ENCODE measurements at regions of chr3 and their contacts with region 1.

Region 1: GRCh38 chr3:191051037-191051436 is 148.0 kb upstream of the OSTN start:
- DNase-seq: no peak
- H3K4me3 ChIP-seq: no peak overlapping the region
- H3K27ac ChIP-seq: no peak overlapping the region
- H3K4me1 ChIP-seq: no peaks in the 10 kb centered on the region
- H3K27me3 ChIP-seq: no peaks in the 10 kb centered on the region
- CTCF ChIP-seq: peak in 2 of 3 experiments; percentile 19 to 40; a peak in 2 of 4 replicates
- EP300 ChIP-seq: no peak
- POLR2A ChIP-seq: no peak
- RAD21 ChIP-seq: peak; percentile 69 to 77

Region 2: GRCh38 chr3:190701096-190701532 is 349.9 kb before region 1 on chr3:
- CTCF ChIA-PET with region 1: interaction called, 23 read pairs
- POLR2A ChIA-PET with region 1: no interaction called
- DNase-seq: peak in 1 of 2 experiments; percentile 21
- H3K4me3 ChIP-seq: no peak overlapping the region
- H3K27ac ChIP-seq: no peak overlapping the region
- H3K4me1 ChIP-seq: no peaks in the 10 kb centered on the region
- H3K27me3 ChIP-seq: no peaks in the 10 kb centered on the region
- CTCF ChIP-seq: peak in 2 of 3 experiments; percentile 61 to 74; a peak in 3 of 4 replicates
- EP300 ChIP-seq: no peak
- POLR2A ChIP-seq: no peak
- RAD21 ChIP-seq: peak; percentile 81 to 85

Region 3: GRCh38 chr3:190811775-190812480 is 239.1 kb before region 1 on chr3:
- CTCF ChIA-PET with region 1: interaction called, 20 read pairs
- POLR2A ChIA-PET with region 1: no interaction called
- DNase-seq: peak; percentile 10 to 57
- H3K4me3 ChIP-seq: no peak overlapping the region
- H3K27ac ChIP-seq: no peak overlapping the region
- H3K4me1 ChIP-seq: no peaks in the 10 kb centered on the region
- H3K27me3 ChIP-seq: no peaks in the 10 kb centered on the region
- CTCF ChIP-seq: peak in 2 of 3 experiments; percentile 65 to 75; a peak in 3 of 4 replicates
- EP300 ChIP-seq: no peak
- POLR2A ChIP-seq: no peak
- RAD21 ChIP-seq: peak; percentile 80 to 87

Region 4: GRCh38 chr3:190883973-190884832 is 166.8 kb before region 1 on chr3:
- CTCF ChIA-PET with region 1: interaction called, 70 read pairs
- POLR2A ChIA-PET with region 1: no interaction called
- DNase-seq: peak; percentile 27 to 51
- H3K4me3 ChIP-seq: no peak overlapping the region
- H3K27ac ChIP-seq: no peak overlapping the region
- H3K4me1 ChIP-seq: no peaks in the 10 kb centered on the region
- H3K27me3 ChIP-seq: no peaks in the 10 kb centered on the region
- CTCF ChIP-seq: peak in 2 of 3 experiments; percentile 59 to 84; a peak in 3 of 4 replicates
- EP300 ChIP-seq: no peak
- POLR2A ChIP-seq: no peak
- RAD21 ChIP-seq: peak; percentile 68 to 72

Region 5: DNA sequence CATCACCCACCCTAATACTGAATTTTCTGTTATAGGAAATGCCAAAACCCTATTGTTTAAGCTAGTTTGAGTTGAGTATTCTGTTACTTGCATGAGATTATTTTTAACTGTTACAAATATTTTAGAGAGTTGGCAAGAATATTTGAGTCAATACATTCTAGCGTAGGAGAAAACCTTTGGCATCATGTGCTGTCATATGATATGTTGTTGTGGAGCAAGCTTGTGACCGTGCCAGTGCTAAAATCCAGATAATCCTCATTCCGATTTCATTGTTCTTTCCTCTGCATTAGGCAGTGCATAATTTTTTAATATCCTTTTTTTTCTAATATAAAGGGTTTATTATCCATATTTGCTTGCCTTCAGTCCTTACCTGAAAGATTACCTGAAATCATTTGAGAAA is 20.5 kb before region 1 on chr3:
- CTCF ChIA-PET with region 1: interaction called, 11 read pairs
- POLR2A ChIA-PET with region 1: no interaction called
- DNase-seq: no peak
- H3K4me3 ChIP-seq: no peak overlapping the region
- H3K27ac ChIP-seq: no peak overlapping the region
- H3K4me1 ChIP-seq: no peaks in the 10 kb centered on the region
- H3K27me3 ChIP-seq: no peaks in the 10 kb centered on the region
- CTCF ChIP-seq: no peak
- EP300 ChIP-seq: no peak
- POLR2A ChIP-seq: no peak
- RAD21 ChIP-seq: no peak

Measured in H1 (cell line).